AG04450 (cell line): ENCODE measurements at regions of chr1 and their contacts with region 1.

Region 1: DNA sequence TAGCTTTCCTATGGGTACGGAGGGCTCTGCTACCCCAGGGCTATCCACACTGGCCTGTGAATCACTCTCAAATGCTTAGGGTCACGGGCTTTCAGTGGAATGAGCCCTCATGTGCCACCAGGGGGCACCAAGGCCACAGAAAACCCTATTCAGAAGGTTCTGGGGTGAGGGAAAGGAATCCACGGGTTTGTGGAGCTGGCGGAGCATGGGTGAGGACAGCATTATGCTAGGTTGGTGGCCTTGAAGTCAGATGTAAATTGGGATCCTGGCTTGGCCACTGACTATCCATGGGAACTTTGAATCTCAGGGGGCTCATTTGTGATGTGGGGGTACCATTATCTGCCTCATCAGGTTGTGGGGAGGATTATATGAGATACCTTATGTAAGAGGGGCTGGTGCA is 5.1 kb upstream of the LAMTOR5 start:
- DNase-seq: no peak
- H3K4me3 ChIP-seq: no peak overlapping the region
- H3K27ac ChIP-seq: no peak overlapping the region
- H3K27me3 ChIP-seq: peaks cover 6% of the 10 kb centered on the region
- CTCF ChIP-seq: peak; percentile 82

Region 2: GRCh38 chr1:110203021-110203661 is 209.4 kb before region 1 on chr1:
- CTCF ChIA-PET with region 1: interaction called, 84 read pairs
- POLR2A ChIA-PET with region 1: no interaction called
- DNase-seq: peak; percentile 38
- H3K4me3 ChIP-seq: no peak overlapping the region
- H3K27ac ChIP-seq: no peak overlapping the region
- H3K27me3 ChIP-seq: peaks cover 3% of the 10 kb centered on the region
- CTCF ChIP-seq: peak; percentile 90

Region 3: GRCh38 chr1:110387048-110387748 is 25.4 kb before region 1 on chr1:
- CTCF ChIA-PET with region 1: interaction called, 10 read pairs
- POLR2A ChIA-PET with region 1: no interaction called
- DNase-seq: no peak
- H3K4me3 ChIP-seq: no peak overlapping the region
- H3K27ac ChIP-seq: no peak overlapping the region
- H3K27me3 ChIP-seq: no peaks in the 10 kb centered on the region
- CTCF ChIP-seq: no peak

Region 4: GRCh38 chr1:110440877-110441276 is 28.3 kb after region 1 on chr1:
- CTCF ChIA-PET with region 1: interaction called, 15 read pairs
- POLR2A ChIA-PET with region 1: no interaction called
- DNase-seq: no peak
- H3K4me3 ChIP-seq: no peak overlapping the region
- H3K27ac ChIP-seq: no peak overlapping the region
- H3K27me3 ChIP-seq: peaks cover 33% of the 10 kb centered on the region
- CTCF ChIP-seq: no peak

Region 5: GRCh38 chr1:110455151-110455550 is 42.6 kb after region 1 on chr1:
- CTCF ChIA-PET with region 1: interaction called, 378 read pairs
- POLR2A ChIA-PET with region 1: no interaction called
- DNase-seq: no peak
- H3K4me3 ChIP-seq: no peak overlapping the region
- H3K27ac ChIP-seq: no peak overlapping the region
- H3K27me3 ChIP-seq: peaks cover 54% of the 10 kb centered on the region
- CTCF ChIP-seq: no peak